Caco-2 (cell line): ENCODE measurements at regions of chr2 and their contacts with region 1.

Region 1: DNA sequence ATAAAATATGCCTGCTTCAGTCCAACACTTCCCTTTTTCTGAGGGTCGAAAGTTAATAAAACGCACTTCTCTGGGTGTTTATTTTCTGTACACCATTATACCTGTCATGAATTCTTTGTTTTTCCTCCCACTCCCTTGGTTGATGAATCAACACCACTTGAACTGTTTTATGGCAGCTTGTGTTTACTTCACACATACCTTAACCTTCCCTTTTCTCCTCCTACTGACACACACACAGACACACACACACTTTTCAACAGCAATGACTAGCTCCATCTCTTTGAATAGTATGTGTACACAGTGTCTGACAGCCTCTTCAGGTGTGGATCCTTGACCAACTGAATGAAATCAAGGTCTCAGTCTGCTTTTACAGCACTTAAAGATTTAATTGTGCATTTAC is 91.3 kb downstream of the SATB2 start:
- DNase-seq: peak; percentile 57 to 60
- H3K4me3 ChIP-seq: no peak overlapping the region
- H3K4me3 Mint-ChIP-seq: no peak overlapping the region
- H3K27ac Mint-ChIP-seq: no peak overlapping the region
- H3K4me1 ChIP-seq: peaks cover 15% of the 10 kb centered on the region; the same call in 1 of the 2 replicates
- H3K4me1 Mint-ChIP-seq: peaks cover 8% of the 10 kb centered on the region
- H3K27me3 ChIP-seq: no peaks in the 10 kb centered on the region
- H3K27me3 Mint-ChIP-seq: no peaks in the 10 kb centered on the region
- CTCF ChIP-seq: no peak

Region 2: GRCh38 chr2:198807131-198807530 is 559.3 kb before region 1 on chr2:
- CTCF ChIA-PET with region 1: no interaction called
- POLR2A ChIA-PET with region 1: no interaction called
- intact Hi-C with region 1: no loop called
- DNase-seq: no peak
- H3K4me3 ChIP-seq: no peak overlapping the region
- H3K4me3 Mint-ChIP-seq: no peak overlapping the region
- H3K27ac Mint-ChIP-seq: no peak overlapping the region
- H3K4me1 ChIP-seq: no peaks in the 10 kb centered on the region
- H3K4me1 Mint-ChIP-seq: no peaks in the 10 kb centered on the region
- H3K27me3 ChIP-seq: no peaks in the 10 kb centered on the region
- H3K27me3 Mint-ChIP-seq: no peaks in the 10 kb centered on the region
- CTCF ChIP-seq: no peak

Region 3: GRCh38 chr2:198968545-198968944 is 397.9 kb before region 1 on chr2:
- CTCF ChIA-PET with region 1: no interaction called
- POLR2A ChIA-PET with region 1: no interaction called
- intact Hi-C with region 1: loop called (anchors 1 kb)
- DNase-seq: peak; percentile 59 to 72
- H3K4me3 ChIP-seq: no peak overlapping the region
- H3K4me3 Mint-ChIP-seq: no peak overlapping the region
- H3K27ac Mint-ChIP-seq: peak overlapping the region; percentile 8
- H3K4me1 ChIP-seq: peaks cover 14% of the 10 kb centered on the region; the same call in 1 of the 2 replicates
- H3K4me1 Mint-ChIP-seq: peaks cover 7% of the 10 kb centered on the region
- H3K27me3 ChIP-seq: no peaks in the 10 kb centered on the region
- H3K27me3 Mint-ChIP-seq: no peaks in the 10 kb centered on the region
- CTCF ChIP-seq: no peak

Region 4: DNA sequence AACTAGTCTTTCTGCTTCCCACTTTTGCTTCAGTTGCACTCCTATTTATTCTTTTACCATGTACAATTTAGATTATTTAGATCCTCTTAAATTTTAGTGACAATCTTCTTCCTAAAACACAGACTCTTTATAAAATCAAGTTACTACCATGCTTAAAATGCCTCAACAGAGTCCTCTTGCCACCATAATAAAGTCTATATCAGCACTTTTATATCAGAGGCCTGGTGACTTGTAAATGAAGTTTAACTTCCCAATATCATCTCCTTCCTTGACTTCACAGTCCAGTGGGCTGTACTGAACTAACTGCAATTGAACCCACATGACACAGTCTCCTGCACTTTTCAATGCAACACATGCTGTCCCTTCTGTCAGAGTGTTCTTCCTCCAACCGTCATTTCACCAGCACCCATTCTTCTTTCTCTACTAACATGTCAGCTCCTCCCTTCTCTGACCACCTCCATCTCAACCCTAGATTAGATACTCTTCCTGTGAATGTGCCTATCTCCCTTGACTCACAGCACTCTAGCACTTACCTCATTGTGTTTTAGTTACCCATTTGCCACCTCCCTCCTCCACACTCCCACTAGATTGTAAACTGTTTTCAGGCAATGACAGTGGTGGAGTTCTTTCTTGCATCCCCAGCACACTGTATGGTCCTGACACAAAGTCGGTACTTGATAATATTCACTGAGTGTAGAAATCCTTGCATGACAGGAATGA is 323.6 kb before region 1 on chr2:
- CTCF ChIA-PET with region 1: no interaction called
- POLR2A ChIA-PET with region 1: no interaction called
- intact Hi-C with region 1: no loop called
- DNase-seq: no peak
- H3K4me3 ChIP-seq: no peak overlapping the region
- H3K4me3 Mint-ChIP-seq: no peak overlapping the region
- H3K27ac Mint-ChIP-seq: no peak overlapping the region
- H3K4me1 ChIP-seq: 0 out of 2 replicates have a peak, but pooled peaks cover 7% of the 10 kb centered on the region
- H3K4me1 Mint-ChIP-seq: no peaks in the 10 kb centered on the region
- H3K27me3 ChIP-seq: no peaks in the 10 kb centered on the region
- H3K27me3 Mint-ChIP-seq: peaks cover 2% of the 10 kb centered on the region
- CTCF ChIP-seq: no peak

Region 5: DNA sequence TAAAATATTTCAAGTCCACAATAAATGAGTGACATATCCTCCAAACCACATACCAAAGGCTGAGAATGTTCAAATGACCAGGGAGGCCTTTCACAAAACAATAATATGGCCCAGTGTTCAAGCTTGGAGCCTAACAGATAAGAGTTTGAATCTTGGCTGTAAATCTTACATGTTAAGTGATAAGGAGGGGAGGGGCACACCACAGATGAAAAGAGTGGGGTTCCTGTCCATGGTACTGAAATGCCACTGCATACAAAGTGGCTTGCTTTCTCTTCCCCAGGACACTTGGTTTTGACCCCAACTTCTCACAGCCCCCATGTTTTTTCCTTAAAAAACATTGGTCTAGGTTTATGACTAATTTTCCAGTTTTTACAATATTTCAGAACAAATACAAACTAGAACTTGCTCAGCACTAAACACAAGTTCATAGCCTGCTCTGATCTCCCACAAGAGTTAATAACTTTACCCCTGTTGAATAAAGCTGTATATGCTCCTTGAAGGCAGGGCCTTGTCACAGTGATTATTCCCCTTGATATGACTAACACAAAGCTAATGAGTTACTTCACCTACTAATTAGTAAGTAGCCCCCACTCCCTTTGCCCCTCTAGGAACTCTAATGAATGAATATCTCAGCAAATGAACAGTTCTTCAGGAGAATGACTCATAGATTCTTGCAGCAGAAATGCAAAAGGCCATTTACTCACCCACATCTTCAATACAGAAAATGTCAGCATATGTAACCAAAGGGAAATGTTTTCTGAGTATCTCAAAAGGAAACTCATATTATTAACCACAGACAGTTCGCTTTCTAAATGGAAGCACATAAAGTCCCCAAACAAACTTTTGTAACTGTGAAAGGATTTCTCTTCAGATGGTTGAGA is 50.9 kb before region 1 on chr2:
- CTCF ChIA-PET with region 1: no interaction called
- POLR2A ChIA-PET with region 1: no interaction called
- intact Hi-C with region 1: loop called (anchors 1 kb)
- DNase-seq: peak; percentile 56 to 68
- H3K4me3 ChIP-seq: no peak overlapping the region
- H3K4me3 Mint-ChIP-seq: no peak overlapping the region
- H3K27ac Mint-ChIP-seq: no peak overlapping the region
- H3K4me1 ChIP-seq: no peaks in the 10 kb centered on the region
- H3K4me1 Mint-ChIP-seq: no peaks in the 10 kb centered on the region
- H3K27me3 ChIP-seq: no peaks in the 10 kb centered on the region
- H3K27me3 Mint-ChIP-seq: no peaks in the 10 kb centered on the region
- CTCF ChIP-seq: no peak

Region 6: DNA sequence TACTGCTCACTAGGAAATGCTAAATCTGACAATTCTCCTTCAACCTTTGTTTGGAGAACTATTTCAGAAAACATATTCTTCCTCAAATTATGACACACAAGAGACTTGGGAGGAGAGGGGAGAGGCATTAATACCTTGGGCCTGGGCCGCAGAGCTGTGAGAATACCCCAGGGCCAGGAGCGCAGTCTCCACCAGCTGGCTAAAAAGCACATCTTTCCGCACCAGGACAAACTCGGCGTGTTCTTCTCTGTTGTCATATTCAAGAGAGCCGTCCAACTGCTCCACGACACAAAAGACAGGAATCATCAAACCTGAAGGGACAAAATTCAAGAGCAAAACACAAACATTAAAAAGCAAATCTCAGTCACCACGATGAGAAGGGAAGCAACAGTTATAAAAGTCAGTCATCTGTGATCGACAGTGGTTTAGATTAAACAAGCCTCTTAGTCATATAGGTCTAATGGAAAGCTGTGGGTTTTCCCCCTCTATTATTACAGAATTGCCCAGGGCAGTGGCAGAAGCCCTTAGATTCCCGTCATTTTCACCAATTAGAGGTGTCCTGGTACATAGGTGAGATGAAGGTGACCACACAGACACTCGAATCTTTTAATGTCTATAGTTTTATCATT is 66.9 kb after region 1 on chr2:
- CTCF ChIA-PET with region 1: no interaction called
- POLR2A ChIA-PET with region 1: no interaction called
- intact Hi-C with region 1: no loop called
- DNase-seq: no peak
- H3K4me3 ChIP-seq: no peak overlapping the region
- H3K4me3 Mint-ChIP-seq: no peak overlapping the region
- H3K27ac Mint-ChIP-seq: no peak overlapping the region
- H3K4me1 ChIP-seq: no peaks in the 10 kb centered on the region
- H3K4me1 Mint-ChIP-seq: no peaks in the 10 kb centered on the region
- H3K27me3 ChIP-seq: no peaks in the 10 kb centered on the region
- H3K27me3 Mint-ChIP-seq: no peaks in the 10 kb centered on the region
- CTCF ChIP-seq: no peak